ENCODE measurements at regions of chr11 and their contacts with region 1.

Region 1: DNA sequence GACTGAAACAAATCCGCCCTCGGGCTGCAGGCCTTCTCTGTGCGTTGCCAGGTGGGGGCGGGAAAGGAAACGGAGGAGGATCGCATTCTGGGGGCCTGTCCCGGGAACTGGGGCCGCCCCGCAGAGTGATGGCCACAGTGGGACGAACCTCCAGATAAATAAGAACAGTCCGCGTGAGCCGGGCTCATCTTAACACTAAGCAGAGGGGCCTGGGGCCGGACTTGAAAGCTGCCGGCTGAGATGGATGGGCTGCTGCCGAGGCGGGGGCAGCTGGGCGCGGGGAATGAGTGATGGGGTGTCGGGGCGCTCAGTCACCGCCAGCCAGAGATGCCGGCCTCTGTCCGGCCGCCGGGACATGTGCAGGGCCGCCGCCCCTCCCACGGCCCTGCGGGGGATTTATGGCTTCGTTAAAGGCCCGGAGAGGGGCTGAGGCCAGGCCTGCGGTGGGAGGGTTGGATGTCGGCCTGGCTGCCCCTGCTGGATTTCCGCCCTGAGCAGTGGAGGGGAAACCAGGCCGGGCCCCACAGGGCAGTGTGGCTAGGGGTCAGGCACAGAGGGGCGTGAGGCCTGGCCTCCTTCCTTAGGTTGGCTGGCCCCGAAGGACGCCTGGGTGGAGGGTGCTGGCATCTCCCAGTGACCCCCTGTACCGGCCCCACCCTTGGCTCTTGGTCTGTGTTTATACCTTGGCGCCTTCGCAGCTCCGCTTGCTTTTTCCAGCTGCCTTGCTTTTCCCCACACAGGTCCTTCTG is 45.3 kb upstream of the CD82 start:
- DNase-seq: no peak
- H3K4me3 ChIP-seq: no peak overlapping the region
- H3K27ac ChIP-seq: no peak overlapping the region
- H3K4me1 ChIP-seq: peaks cover 0 to 4% (median 0%) of the 10 kb centered on the region in 4 experiments; a peak in 1 of 7 replicates
- H3K27me3 ChIP-seq: no peaks in the 10 kb centered on the region
- CTCF ChIP-seq: no peak
- EP300 ChIP-seq: no peak
- POLR2A ChIP-seq: no peak
- RAD21 ChIP-seq: no peak

Region 2: GRCh38 chr11:44531116-44531504 is 10.9 kb after region 1 on chr11:
- CTCF ChIA-PET with region 1: interaction called, 120 read pairs
- POLR2A ChIA-PET with region 1: interaction called, 3 read pairs
- DNase-seq: no peak
- H3K4me3 ChIP-seq: no peak overlapping the region
- H3K27ac ChIP-seq: no peak overlapping the region
- H3K4me1 ChIP-seq: peaks cover 0 to 2% (median 0%) of the 10 kb centered on the region in 4 experiments; a peak in 5 of 7 replicates
- H3K27me3 ChIP-seq: no peaks in the 10 kb centered on the region
- CTCF ChIP-seq: no peak
- EP300 ChIP-seq: no peak
- POLR2A ChIP-seq: no peak
- RAD21 ChIP-seq: no peak

Region 3: DNA sequence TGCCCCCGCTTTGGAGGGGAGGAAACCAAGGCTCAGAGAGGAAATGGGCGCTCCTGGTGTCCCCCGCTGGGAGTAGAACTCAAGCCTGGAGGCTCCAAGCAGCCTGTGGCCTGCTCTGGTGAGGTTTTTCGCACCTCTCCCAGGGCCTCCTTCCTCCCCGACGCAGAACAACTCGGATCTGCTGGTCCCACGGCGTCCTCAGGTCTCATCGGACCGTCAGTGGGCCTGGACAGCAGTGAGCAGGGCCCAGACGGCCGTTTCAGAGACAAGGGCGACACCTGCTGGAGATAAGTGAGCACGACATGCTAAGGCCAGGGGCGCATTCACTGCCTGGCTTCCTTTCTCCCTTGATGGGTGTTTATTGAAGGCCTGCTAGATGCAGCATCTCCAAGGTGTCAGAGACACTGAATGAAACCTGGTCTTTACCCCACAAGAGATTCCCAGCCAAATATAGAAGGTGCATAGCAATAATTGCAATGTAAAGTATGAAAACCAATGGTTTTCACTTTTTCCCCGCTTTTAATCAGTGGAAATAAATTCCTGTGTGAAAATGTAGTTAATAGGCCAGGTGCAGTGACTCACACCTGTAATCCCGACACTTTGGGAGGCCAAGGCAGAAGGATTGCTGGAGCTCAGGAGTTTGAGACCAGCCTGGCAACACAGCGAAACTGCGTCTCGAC is 18.4 kb after region 1 on chr11:
- CTCF ChIA-PET with region 1: interaction called, 120 read pairs
- POLR2A ChIA-PET with region 1: no interaction called
- DNase-seq: peak; percentile 46 to 92
- H3K4me3 ChIP-seq: no peak overlapping the region
- H3K27ac ChIP-seq: no peak overlapping the region
- H3K4me1 ChIP-seq: peaks cover 2 to 11% (median 3%) of the 10 kb centered on the region in 4 experiments; a peak in 6 of 7 replicates
- H3K27me3 ChIP-seq: peaks cover 0 to 6% (median 3%) of the 10 kb centered on the region in 4 experiments; a peak in 3 of 7 replicates
- CTCF ChIP-seq: peak; percentile 95 to 98 (median 96)
- EP300 ChIP-seq: no peak
- POLR2A ChIP-seq: no peak
- RAD21 ChIP-seq: peak; percentile 99 to 100

Region 4: DNA sequence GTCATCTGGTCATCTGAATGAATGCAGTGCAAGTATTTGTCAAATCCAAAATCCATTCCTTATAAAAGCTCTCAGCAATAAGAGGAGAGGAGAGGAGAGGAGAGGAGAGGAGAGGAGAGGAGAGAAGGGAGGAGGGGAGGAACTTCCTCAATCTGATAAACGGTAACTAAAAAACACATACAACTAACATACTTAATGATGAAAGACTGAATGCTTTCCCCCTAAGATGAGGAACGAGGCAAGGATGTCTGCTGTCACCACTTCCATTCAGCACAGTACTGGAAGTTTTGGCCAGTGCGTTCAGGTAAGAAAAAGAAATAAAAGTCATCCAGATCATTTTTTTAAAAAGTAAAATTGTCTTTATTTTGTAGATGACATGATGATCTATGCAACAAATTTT is 125.7 kb after region 1 on chr11:
- CTCF ChIA-PET with region 1: no interaction called
- POLR2A ChIA-PET with region 1: no interaction called
- DNase-seq: no peak
- H3K4me3 ChIP-seq: no peak overlapping the region
- H3K27ac ChIP-seq: no peak overlapping the region
- H3K4me1 ChIP-seq: no peaks in the 10 kb centered on the region
- H3K27me3 ChIP-seq: no peaks in the 10 kb centered on the region
- CTCF ChIP-seq: no peak
- EP300 ChIP-seq: no peak
- POLR2A ChIP-seq: no peak
- RAD21 ChIP-seq: no peak

Measured in H1 (cell line).